GM18951 (cell line): ENCODE measurements at regions of chr15 and their contacts with region 1.

Region 1: GRCh38 chr15:98177924-98178592 is 217.6 kb downstream of the ARRDC4 start:
- POLR2A ChIP-seq: no peak

Region 2: DNA sequence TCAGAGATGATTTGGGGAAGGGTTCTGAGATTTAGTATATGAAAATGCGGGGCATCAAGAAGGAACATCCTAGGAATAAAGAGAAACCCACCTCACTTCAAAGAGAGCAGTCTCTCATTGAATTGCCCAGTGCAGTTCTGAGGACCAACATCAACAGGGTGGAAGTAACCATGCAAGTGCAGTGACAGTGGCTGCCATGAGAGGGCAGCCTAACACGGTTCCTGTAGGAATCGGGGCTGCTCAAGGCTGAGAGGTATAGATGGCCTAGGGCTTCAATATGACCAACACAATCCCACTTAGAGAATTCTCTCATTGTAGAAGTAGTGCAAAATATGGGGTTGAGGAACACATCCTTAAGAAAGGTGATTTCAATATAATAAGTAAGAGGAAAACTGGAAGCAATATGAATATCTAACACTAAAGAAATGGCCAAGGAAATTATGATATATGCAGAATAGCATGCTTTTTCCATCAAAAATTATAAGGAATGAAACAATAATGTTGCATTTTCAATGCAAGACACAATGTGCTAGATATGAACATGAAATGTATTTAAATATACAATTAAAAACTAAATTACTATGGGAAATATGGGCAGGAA is 268.7 kb before region 1 on chr15:
- in situ Hi-C with region 1: loop called (anchors 25 kb)
- POLR2A ChIP-seq: no peak

Region 3: DNA sequence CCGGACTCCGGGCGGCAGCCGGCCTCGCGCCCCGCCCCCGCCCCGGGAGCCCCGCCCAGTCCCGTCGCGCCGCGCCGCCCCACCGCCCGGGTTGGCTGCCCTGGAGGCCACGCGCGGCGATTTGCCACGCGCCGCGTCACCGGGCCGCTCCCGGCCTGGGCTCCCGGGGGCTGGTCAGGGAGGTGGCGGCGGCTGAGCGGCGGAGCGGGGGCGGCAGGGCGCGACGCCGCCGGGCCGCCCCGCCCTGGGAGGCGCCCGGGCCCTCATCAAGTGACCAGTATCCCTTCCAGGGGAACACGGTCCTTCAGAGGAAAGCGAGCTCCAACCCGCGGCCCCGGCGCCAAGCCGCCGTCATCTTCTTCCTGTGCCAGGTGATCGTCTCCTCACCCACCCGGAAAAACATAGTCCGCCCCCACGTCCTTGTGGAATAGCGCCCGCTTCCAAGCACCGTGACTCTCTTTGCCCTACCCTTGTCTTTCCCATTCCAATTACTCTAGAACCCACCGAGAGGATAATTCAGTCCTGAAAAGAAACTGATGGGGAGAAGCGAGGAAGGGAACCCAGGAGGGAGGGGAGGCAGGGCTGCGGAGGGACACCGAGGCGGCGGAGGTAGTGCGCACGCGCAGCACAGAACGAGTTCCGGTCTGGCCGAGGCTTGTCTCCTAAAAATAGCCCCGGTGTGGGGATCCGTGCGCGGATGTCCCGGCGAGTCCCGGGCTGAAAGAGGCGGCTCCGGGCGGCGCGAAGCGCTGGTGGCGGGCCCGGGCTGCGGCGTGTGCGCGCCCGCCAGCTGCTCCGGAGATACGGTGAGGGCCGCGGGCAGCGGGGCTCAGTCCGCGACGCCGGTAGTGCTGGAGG is 1387.5 kb after region 1 on chr15 and contains the start of gene MEF2A:
- in situ Hi-C with region 1: no loop called
- POLR2A ChIP-seq: peak; percentile 88